Common myeloid progenitor, CD34-positive (primary cell): ENCODE measurements at regions of chr16 and their contacts with region 1.

Region 1: GRCh38 chr16:56866943-56867830 is 2.2 kb downstream of the SLC12A3 start:
- DNase-seq: peak; percentile 63 to 74 (median 68)
- H3K4me3 ChIP-seq: no peak overlapping the region
- H3K27ac ChIP-seq: no peak overlapping the region
- H3K4me1 ChIP-seq: peaks cover 0 to 16% (median 15%) of the 10 kb centered on the region in 4 experiments
- H3K27me3 ChIP-seq: no peaks in the 10 kb centered on the region

Region 2: GRCh38 chr16:56851671-56852400 is 15.4 kb before region 1 on chr16:
- CTCF ChIA-PET with region 1: interaction called, 37 read pairs
- POLR2A ChIA-PET with region 1: no interaction called
- DNase-seq: peak in 2 of 3 donors; percentile 49 to 55
- H3K4me3 ChIP-seq: no peak overlapping the region
- H3K27ac ChIP-seq: no peak overlapping the region
- H3K4me1 ChIP-seq: peaks cover 4 to 38% (median 31%) of the 10 kb centered on the region in 4 experiments
- H3K27me3 ChIP-seq: no peaks in the 10 kb centered on the region

Region 3: GRCh38 chr16:56950881-56951771 is 83.9 kb after region 1 on chr16:
- CTCF ChIA-PET with region 1: interaction called, 26 read pairs
- POLR2A ChIA-PET with region 1: no interaction called
- DNase-seq: peak; percentile 51 to 81 (median 80)
- H3K4me3 ChIP-seq: peak overlapping the region in 1 of 7 experiments; percentile 12
- H3K27ac ChIP-seq: no peak overlapping the region
- H3K4me1 ChIP-seq: peaks cover 0 to 14% (median 6%) of the 10 kb centered on the region in 4 experiments
- H3K27me3 ChIP-seq: no peaks in the 10 kb centered on the region

Region 4: DNA sequence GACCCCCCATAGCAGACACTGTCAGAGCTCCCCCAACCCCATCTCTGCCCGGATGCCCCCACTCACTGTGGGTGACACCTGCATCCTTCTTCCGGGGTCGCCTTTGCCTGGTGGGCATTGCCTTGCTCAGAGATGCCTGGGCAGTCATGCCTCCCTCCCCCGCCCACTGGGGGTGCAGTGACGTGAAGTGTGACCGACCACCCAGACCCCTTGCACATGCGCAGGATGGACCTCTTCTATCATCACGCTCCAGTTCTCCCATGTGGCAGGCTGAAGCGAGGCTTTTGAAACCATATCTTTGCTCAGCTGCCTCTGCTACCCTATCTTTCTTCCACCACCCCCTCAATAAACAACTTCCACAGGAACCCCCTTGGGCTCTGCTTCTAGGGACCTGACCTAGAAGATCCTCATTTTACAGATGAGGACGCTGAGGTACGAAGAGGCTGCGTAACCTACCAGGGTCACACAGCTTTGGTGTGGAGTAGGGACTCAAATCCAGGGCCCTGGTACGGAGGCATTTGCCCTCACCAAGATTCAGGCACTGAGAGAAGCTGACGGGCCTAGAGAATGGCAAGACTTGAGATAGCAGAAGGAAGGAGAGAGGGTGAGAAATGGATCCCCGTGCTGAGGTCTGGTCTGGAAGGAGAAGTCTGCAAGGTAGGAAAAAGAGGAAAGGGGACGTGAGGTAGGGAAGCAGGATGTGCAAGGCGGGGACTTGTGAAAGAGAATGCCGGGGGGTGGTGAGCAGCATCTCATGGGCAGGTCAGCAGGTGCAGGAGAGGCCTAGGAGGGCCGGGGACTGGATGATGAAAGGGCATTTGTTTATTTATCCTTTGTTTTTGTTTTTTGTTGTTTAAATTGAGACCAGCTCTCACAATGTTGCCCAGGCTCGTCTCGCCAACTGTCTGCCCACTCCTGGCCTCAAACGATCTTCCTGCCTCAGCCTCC is 136.5 kb after region 1 on chr16:
- CTCF ChIA-PET with region 1: no interaction called
- POLR2A ChIA-PET with region 1: no interaction called
- DNase-seq: peak in 2 of 3 donors; percentile 42 to 51
- H3K4me3 ChIP-seq: no peak overlapping the region
- H3K27ac ChIP-seq: no peak overlapping the region
- H3K4me1 ChIP-seq: peaks cover 0 to 6% (median 0%) of the 10 kb centered on the region in 4 experiments
- H3K27me3 ChIP-seq: no peaks in the 10 kb centered on the region